GM10248 (cell line): ENCODE measurements at regions of chr19 and their contacts with region 1.

Region 1: GRCh38 chr19:55088543-55089341 is 13.1 kb downstream of the EPS8L1 start:
- DNase-seq: peak; percentile 81
- CTCF ChIP-seq: peak; percentile 66

Region 2: GRCh38 chr19:55075687-55076003 is 13.1 kb before region 1 on chr19 and contains the start of gene EPS8L1:
- CTCF ChIA-PET with region 1: interaction called, 13 read pairs
- POLR2A ChIA-PET with region 1: no interaction called
- DNase-seq: no peak
- CTCF ChIP-seq: no peak

Region 3: DNA sequence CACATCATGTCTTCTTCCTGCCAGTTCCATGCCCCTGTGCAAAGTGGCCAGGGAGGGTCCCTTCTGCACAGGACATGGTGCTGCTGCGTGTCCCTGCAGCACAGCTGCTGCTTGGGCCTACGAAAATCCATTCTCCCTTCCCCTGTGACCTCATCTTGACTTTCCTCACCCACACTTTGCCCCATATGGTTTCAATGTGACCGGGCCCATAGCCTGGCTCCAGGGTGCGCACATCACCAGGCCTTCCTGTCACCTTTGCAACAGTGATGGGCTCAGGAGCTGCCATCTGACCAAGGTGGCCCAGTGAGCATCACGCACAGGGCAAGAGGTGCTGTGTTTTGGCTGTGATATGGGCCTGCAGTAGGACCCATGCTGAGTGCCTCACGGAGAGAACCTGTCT is 17.8 kb after region 1 on chr19:
- CTCF ChIA-PET with region 1: interaction called, 25 read pairs
- POLR2A ChIA-PET with region 1: no interaction called
- DNase-seq: no peak
- CTCF ChIP-seq: no peak

Region 4: GRCh38 chr19:55112246-55112776 is 23.6 kb after region 1 on chr19:
- CTCF ChIA-PET with region 1: interaction called, 25 read pairs
- POLR2A ChIA-PET with region 1: interaction called, 3 read pairs
- DNase-seq: no peak
- CTCF ChIP-seq: no peak

Region 5: DNA sequence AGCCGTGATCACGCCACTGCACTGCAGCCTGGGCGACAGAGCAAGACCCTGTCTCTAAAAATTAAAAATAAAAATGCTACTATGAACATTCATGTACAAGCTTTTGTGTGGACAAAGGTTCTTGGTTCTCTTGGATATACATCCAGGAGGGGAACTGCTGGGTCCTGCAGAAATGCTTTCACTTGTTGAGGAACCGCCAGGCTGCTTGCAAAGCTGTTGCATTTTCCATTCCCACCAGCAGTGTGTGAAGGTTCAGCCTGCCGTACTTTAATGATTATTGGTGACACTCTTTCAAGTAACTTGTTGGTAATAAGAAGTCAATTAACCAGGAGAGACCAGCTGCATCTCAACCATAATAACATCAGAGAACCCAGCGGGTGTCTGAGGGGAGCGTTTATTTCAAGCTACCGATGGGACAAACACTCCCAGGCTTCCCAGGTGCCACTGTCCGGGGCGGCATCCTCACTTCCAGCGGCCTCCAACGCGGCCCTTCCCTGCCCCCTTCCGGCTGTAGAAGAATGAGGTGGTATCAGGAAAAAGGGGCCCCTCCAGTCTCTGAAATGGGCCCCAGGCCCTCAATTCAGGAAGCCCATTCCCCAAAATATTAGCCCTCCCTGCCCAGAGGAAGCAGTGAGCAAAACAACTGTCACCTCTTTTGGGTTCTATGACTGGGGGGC is 43.8 kb after region 1 on chr19:
- CTCF ChIA-PET with region 1: interaction called, 40 read pairs
- POLR2A ChIA-PET with region 1: no interaction called
- DNase-seq: peak; percentile 35
- CTCF ChIP-seq: no peak